GM12878 (cell line): ENCODE measurements at regions of chr16 and their contacts with region 1.

Region 1: GRCh38 chr16:30534368-30535105 is at the start of gene ZNF747:
- DNase-seq: peak; percentile 51
- ATAC-seq: peak; percentile 89
- H3K4me3 ChIP-seq: peak within 1 kb of the TSS; percentile 90
- H3K27ac ChIP-seq: peak within 1 kb of the TSS; percentile 85
- H3K4me1 ChIP-seq: no peaks in the 10 kb centered on the region
- H3K27me3 ChIP-seq: no peaks in the 10 kb centered on the region
- CTCF ChIP-seq: peak in 1 of 3 experiments; percentile 1; a peak in 1 of 6 replicates
- EP300 ChIP-seq: no peak
- POLR2A ChIP-seq: peak; percentile 76
- RAD21 ChIP-seq: no peak
- polyA plus RNA-seq, gene ZNF747: 1.0 to 1.2 TPM

Region 2: GRCh38 chr16:29674188-29674587 is 860.3 kb before region 1 on chr16:
- CTCF ChIA-PET with region 1: no interaction called
- POLR2A ChIA-PET with region 1: no interaction called
- RAD21 ChIA-PET with region 1: no interaction called
- SMC1A ChIA-PET with region 1: no interaction called
- in situ Hi-C with region 1: no loop called
- intact Hi-C with region 1: no loop called
- DNase-seq: no peak
- ATAC-seq: no peak
- H3K4me3 ChIP-seq: no peak overlapping the region
- H3K27ac ChIP-seq: no peak overlapping the region
- H3K4me1 ChIP-seq: peaks cover 5% of the 10 kb centered on the region; the same call in 1 of the 2 replicates
- H3K27me3 ChIP-seq: no peaks in the 10 kb centered on the region
- CTCF ChIP-seq: no peak
- EP300 ChIP-seq: no peak
- POLR2A ChIP-seq: no peak
- RAD21 ChIP-seq: no peak

Region 3: DNA sequence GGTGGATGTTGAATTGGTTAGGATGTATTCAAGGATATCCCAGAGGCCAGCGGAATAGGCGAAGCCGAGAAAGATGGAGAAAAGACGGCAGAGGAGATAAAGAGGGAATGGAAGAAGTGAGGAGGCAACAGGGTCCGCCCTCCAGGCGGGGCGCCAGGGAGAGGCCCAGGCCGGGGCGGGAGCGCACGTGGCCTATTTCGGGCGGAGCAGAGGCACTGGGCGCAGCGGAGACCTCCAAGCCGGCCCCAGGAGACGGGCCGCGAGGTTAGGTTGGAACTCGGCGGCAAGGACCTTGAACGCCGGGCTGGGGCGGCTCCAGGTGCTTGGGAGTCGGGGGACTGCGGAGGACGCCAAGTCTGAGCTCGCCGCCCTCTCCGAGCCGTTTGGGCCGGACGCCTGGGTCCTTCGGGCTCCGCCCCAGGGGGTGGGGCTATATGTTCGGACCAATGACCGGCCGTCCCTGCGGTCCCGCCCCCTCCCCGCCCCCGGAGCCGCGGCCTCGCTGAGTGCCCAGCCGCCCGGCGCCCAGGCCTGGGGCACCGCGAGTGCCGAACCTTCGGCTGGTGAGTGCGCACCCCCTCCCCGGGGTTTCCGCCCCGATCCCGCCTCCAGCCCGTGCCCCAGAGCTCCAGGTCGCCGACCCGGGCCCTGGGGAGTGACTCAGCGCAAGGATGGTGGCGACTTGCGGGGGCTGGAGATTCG is 127.3 kb before region 1 on chr16 and contains the start of gene ZNF771:
- CTCF ChIA-PET with region 1: interaction called, 9 read pairs
- POLR2A ChIA-PET with region 1: interaction called, 4 read pairs
- RAD21 ChIA-PET with region 1: interaction called, 18 read pairs
- SMC1A ChIA-PET with region 1: no interaction called
- in situ Hi-C with region 1: no loop called
- intact Hi-C with region 1: no loop called
- DNase-seq: no peak
- ATAC-seq: peak; percentile 93
- H3K4me3 ChIP-seq: peak within 1 kb of the TSS; percentile 83
- H3K27ac ChIP-seq: no peak within 1 kb of the TSS
- H3K4me1 ChIP-seq: peaks cover 14% of the 10 kb centered on the region
- H3K27me3 ChIP-seq: no peaks in the 10 kb centered on the region; a peak in 1 of 4 replicates
- CTCF ChIP-seq: peak in 1 of 3 experiments; percentile 21; a peak in 1 of 6 replicates
- EP300 ChIP-seq: no peak
- POLR2A ChIP-seq: peak; percentile 82
- RAD21 ChIP-seq: no peak
- polyA plus RNA-seq, gene ZNF771: 0.98 to 2.0 TPM

Region 4: DNA sequence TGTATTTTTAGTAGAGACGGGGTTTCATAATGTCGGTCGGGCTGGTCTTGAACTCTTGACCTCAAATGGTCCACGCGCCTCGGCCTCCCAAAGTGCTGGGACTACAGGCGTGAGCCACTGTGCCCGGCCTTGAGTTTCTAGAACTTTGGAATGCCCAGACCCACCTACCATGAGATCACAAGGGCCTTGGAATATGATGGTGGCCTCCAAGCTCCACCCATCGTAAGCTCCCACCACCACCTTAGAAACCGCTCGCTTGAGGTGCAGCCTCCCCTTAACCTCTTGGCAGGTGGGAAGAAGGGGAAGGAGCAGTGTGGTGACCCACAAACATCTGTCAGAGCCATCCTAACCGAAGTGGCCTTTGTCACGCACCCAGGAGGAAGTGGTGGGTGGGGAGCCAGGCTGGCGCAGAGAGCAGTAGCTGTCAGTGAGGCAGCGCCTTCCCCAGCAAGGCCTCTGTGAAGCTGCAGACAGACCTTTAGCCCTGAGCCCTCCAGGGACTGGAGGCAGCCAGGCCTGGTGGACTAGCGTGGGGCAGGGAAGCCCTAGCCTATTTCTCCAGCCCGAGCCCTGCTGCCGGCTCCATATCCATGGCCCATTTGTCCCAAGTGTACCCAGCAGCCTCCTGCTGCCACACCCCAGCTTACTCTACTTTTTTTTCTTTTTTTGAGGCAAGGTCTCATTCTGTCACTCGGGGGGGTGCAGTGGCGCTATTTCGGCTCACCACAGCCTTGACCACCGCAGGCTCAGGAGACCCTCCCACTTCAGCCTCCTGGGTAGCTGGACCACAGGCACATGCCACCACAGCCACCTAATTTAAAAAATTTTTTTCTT is 75.8 kb before region 1 on chr16:
- CTCF ChIA-PET with region 1: interaction called, 25 read pairs
- POLR2A ChIA-PET with region 1: interaction called, 36 read pairs
- RAD21 ChIA-PET with region 1: interaction called, 37 read pairs
- SMC1A ChIA-PET with region 1: interaction called, 8 read pairs
- in situ Hi-C with region 1: no loop called
- intact Hi-C with region 1: no loop called
- DNase-seq: peak; percentile 97
- ATAC-seq: peak; percentile 86
- H3K4me3 ChIP-seq: peak overlapping the region; percentile 9; the same call in 1 of the 2 replicates
- H3K27ac ChIP-seq: peak overlapping the region; percentile 89
- H3K4me1 ChIP-seq: peaks cover 47% of the 10 kb centered on the region
- H3K27me3 ChIP-seq: no peaks in the 10 kb centered on the region
- CTCF ChIP-seq: no peak
- EP300 ChIP-seq: peak; percentile 99 to 100
- POLR2A ChIP-seq: peak; percentile 96
- RAD21 ChIP-seq: 0 out of 2 replicates have a peak, but pooled peaks have one; percentile 22

Region 5: GRCh38 chr16:30551781-30552180 is 17.2 kb after region 1 on chr16:
- CTCF ChIA-PET with region 1: interaction called, 59 read pairs
- POLR2A ChIA-PET with region 1: interaction called, 109 read pairs
- RAD21 ChIA-PET with region 1: interaction called, 99 read pairs
- SMC1A ChIA-PET with region 1: interaction called, 47 read pairs
- in situ Hi-C with region 1: no loop called
- intact Hi-C with region 1: no loop called
- DNase-seq: no peak
- ATAC-seq: no peak
- H3K4me3 ChIP-seq: no peak overlapping the region
- H3K27ac ChIP-seq: no peak overlapping the region
- H3K4me1 ChIP-seq: no peaks in the 10 kb centered on the region
- H3K27me3 ChIP-seq: no peaks in the 10 kb centered on the region
- CTCF ChIP-seq: no peak
- EP300 ChIP-seq: no peak
- POLR2A ChIP-seq: no peak
- RAD21 ChIP-seq: no peak

Region 6: DNA sequence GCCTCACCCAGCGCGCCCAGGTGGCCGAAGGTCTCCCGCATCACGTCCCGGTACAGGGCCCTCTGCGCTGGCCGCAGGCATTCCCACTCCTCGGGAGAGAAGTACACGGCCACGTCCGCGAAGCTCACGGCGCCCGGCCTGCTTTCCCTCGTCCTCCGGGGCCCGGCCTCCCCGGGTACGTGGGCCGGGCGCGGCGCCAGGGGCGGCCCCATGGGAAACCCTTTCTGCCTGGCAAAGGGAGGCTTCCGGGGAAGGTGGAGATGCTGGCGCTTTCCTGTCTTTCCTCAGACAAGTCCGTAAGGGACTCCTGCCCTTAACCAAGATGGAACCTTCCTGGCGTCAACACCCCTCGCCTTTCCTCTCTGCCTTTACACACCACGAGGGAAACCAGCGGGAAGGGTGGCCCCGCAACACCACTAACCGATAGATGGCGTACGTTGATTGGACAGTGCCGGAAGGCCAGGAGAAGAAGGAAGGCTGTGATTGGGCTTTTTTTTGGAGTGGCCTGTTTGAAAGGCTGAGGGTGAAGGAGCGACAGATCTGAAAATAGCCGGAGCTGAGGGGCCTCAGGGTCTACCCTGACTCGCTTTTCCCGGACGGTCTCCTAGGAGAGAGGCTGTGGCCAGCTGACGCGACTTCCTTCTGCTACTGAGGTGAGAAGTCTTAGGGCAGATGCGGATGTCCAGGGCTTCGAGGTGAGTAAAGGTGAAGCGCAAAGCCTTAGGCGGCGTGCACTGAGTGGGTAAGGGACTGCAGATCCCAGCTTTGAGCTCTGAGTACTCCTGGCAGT is 51.1 kb after region 1 on chr16 and contains the start of gene ZNF785:
- CTCF ChIA-PET with region 1: interaction called, 11 read pairs
- POLR2A ChIA-PET with region 1: interaction called, 16 read pairs
- RAD21 ChIA-PET with region 1: interaction called, 13 read pairs
- SMC1A ChIA-PET with region 1: interaction called, 17 read pairs
- in situ Hi-C with region 1: no loop called
- intact Hi-C with region 1: loop called (anchors 2 kb)
- DNase-seq: peak; percentile 97
- ATAC-seq: peak; percentile 98
- H3K4me3 ChIP-seq: peak within 1 kb of the TSS; percentile 98
- H3K27ac ChIP-seq: peak within 1 kb of the TSS; percentile 89
- H3K4me1 ChIP-seq: peaks cover 3% of the 10 kb centered on the region; the same call in 1 of the 2 replicates
- H3K27me3 ChIP-seq: no peaks in the 10 kb centered on the region
- CTCF ChIP-seq: peak in 2 of 3 experiments; percentile 14 to 33; a peak in 3 of 6 replicates
- EP300 ChIP-seq: no peak
- POLR2A ChIP-seq: peak; percentile 51
- RAD21 ChIP-seq: no peak
- polyA plus RNA-seq, gene ZNF785: 0.87 to 1.5 TPM

Region 7: DNA sequence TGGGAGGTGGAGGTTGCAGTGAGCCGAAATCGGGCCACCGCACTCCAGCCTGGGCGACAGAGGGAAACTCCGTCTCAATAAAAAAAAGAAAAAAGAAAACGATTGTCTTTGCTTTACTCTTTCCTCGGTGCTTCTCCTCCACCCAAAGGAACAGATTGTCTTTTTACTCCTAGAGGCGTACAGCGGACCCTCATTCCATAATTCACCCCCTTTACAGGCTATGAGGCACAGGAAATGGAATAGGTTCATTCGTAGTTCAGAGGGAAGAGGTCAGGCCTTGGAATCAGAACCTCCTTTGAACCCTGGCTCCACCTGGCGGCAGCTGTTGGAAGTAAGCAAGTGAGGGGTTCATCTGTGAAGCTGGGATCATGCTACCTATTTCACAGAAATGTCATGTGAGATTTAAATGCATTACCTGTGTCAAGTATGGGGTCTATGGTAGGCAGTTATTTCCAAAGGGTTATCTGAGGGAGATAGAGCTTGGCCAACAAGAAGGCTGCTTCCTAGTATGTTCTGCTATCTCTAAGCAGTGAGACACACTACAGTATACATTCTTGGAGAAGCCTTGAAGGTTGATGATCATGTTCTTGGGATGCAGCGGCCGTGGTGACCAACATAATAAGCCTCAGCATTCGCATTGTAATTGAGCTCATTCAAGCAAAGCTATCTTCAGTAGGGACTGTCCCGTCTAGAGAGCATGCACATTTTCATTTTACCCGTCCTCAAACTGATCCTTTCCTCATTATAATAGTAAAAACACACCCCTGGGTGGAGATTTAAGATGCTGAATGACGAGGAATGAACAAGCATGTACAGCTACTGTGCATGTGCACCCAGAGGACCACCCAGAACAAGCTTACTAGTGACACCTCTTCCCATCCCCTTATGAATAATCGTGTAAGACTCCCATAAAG is 94.3 kb after region 1 on chr16:
- CTCF ChIA-PET with region 1: interaction called, 15 read pairs
- POLR2A ChIA-PET with region 1: interaction called, 8 read pairs
- RAD21 ChIA-PET with region 1: interaction called, 13 read pairs
- SMC1A ChIA-PET with region 1: interaction called, 10 read pairs
- in situ Hi-C with region 1: no loop called
- intact Hi-C with region 1: no loop called
- DNase-seq: no peak
- ATAC-seq: peak; percentile 97
- H3K4me3 ChIP-seq: no peak overlapping the region
- H3K27ac ChIP-seq: no peak overlapping the region
- H3K4me1 ChIP-seq: peaks cover 5% of the 10 kb centered on the region
- H3K27me3 ChIP-seq: no peaks in the 10 kb centered on the region
- CTCF ChIP-seq: peak; percentile 90 to 95 (median 93); a peak in 5 of 6 replicates
- EP300 ChIP-seq: no peak
- POLR2A ChIP-seq: no peak
- RAD21 ChIP-seq: peak; percentile 81